ENCODE measurements at regions of chr1 and their contacts with region 1.

Region 1: DNA sequence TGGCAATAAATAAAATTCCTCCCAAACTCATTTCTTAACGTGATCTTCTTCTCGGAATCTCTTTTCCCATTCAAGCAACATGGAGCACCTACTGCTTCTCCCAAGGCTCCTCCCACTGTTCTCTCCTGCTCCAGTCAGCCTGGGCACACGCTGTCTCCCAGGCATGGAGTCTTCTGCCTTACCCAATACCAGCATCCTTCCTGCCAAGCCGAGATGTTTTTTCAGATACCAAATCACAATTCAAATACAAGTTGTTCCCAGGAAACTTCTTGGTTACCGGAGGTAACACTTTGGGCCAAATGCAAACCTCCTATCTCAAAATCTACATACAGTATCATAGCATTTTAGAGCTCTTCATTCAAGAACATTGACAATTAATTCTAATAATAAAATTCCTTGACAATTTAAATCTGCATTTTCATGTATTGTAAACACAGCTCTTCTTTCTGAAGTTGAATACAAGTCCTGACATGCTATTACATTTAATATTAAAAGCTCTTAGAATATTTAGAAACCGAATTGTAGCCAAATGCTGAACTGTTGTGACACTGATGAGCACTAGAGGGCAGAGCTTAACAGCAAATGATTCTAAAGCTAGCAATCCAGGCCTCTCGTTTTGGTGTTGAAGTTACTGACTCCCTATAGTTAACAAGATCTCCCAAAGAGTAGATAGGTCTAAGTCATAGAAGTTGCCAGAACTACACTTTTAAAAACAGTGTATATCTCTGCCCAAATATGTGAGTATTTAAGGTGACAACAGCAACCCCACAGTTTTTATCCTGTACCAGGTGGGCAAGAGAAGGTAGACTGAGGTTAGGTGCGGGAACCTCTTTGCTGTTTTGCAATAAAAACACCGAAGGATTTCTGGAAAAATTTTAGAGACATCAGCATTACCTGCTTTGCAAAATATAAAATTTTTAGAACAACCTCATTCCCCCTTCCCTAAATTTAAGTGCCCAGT is 52.3 kb downstream of the BCAR3 start:
- DNase-seq: no peak
- ATAC-seq: peak; percentile 86

Region 2: DNA sequence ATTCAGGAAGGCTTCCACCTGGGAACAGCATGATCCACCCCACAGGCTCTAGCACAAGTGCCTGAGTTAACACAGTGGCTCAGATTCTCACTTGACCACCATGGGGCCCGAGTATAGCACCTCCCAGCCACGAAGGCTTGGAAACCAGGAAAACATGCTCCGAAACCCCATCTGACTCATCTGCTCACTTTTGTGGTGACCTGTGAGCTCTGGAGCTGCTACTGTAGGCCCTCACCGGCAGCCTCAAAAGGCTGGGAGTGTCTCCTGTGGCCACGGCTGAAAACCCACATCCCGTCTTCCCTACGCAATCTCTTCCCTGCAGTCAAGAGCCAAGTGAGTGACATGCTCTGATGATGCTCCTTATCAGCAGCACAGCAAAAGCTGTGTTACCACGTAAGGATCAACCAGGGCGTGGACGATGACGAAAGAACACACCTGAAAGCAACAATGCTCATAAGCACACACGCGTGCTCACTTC is 1824.8 kb before region 1 on chr1:
- intact Hi-C with region 1: loop called (anchors 5 kb)
- DNase-seq: no peak
- ATAC-seq: peak; percentile 49

Region 3: GRCh38 chr1:93196591-93196990 is 432.8 kb before region 1 on chr1:
- intact Hi-C with region 1: no loop called
- DNase-seq: no peak
- ATAC-seq: no peak

Region 4: GRCh38 chr1:93437976-93438605 is 191.3 kb before region 1 on chr1:
- intact Hi-C with region 1: loop called (anchors 5 kb)
- DNase-seq: no peak
- ATAC-seq: peak; percentile 66

Region 5: DNA sequence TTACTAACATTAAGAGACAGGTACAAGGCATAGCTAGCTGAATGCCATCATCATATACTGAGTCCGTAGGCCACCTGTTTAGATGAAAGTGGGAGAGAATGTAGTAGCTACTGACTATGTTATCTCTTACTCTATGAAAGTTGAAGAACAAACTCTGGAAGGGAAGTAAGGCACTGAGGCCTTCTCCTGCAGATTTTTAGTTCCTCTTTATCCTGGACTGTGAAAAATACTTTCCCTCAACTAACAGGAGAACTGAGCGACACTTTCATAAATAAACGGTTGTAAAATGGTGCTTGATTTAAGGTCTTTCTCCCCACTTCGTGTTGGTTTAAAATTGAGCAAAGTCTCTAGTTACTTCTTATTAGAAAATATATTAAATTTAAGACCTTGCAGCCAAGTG is 79.6 kb before region 1 on chr1:
- intact Hi-C with region 1: no loop called
- DNase-seq: no peak
- ATAC-seq: no peak

Region 6: DNA sequence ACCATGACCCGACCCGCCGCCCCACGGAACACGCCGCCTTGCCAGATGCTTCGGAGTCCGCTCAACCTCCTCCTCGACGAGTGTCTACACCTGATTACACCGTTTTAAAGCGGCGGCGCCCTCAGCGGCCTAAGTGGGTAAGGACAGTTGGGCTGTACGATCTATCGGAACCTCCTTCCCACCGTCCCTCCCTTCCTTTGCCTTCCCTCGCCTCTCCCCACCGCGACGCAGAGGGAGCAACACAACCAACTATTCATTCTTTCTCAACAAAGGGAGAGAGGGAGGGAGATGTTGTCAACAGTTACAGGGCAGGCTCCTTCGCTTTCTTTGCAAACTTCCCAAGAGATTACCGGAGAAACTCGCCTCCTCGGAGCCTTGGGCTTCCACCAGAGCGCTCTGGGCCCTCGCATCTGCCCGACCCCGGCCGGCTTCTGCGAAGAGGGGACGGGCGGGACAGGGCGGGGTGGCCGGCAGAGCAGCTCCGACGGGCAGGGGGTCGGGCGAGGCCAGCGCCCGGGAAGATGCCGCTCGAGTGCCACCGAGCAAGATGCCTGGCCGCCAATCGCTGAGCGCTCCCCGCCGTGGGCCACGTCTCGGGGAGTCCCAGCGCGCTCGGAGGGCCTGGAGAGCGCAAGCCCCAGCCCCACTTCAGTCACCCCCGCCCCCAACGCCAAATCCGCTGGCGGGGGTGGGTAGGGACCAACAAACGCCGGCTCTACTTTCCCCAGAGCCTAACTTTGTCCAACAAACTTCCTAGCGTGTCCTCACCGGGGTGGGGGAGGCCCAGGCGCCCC is 51.6 kb after region 1 on chr1:
- intact Hi-C with region 1: loop called (anchors 10 kb)
- DNase-seq: peak; percentile 92
- ATAC-seq: peak; percentile 96

Region 7: GRCh38 chr1:93814059-93814794 is 184.8 kb after region 1 on chr1:
- intact Hi-C with region 1: loop called (anchors 5 kb)
- DNase-seq: peak; percentile 71
- ATAC-seq: peak; percentile 74

Region 8: GRCh38 chr1:93846211-93846991 is 217.0 kb after region 1 on chr1:
- intact Hi-C with region 1: loop called (anchors 10 kb)
- DNase-seq: peak; percentile 94
- ATAC-seq: peak; percentile 86